ENCODE measurements at regions of chr3 and their contacts with region 1.

Region 1: GRCh38 chr3:187025656-187026316 is 95.5 kb downstream of the ST6GAL1 start:
- DNase-seq: peak in 1 of 2 donors; percentile 38
- H3K4me3 ChIP-seq: no peak overlapping the region
- H3K27ac ChIP-seq: peak overlapping the region; percentile 5 to 71 (median 36)
- H3K4me1 ChIP-seq: peaks cover 20 to 78% of the 10 kb centered on the region in 2 donors
- H3K27me3 ChIP-seq: no peaks in the 10 kb centered on the region
- CTCF ChIP-seq: no peak
- POLR2A ChIP-seq: no peak

Region 2: DNA sequence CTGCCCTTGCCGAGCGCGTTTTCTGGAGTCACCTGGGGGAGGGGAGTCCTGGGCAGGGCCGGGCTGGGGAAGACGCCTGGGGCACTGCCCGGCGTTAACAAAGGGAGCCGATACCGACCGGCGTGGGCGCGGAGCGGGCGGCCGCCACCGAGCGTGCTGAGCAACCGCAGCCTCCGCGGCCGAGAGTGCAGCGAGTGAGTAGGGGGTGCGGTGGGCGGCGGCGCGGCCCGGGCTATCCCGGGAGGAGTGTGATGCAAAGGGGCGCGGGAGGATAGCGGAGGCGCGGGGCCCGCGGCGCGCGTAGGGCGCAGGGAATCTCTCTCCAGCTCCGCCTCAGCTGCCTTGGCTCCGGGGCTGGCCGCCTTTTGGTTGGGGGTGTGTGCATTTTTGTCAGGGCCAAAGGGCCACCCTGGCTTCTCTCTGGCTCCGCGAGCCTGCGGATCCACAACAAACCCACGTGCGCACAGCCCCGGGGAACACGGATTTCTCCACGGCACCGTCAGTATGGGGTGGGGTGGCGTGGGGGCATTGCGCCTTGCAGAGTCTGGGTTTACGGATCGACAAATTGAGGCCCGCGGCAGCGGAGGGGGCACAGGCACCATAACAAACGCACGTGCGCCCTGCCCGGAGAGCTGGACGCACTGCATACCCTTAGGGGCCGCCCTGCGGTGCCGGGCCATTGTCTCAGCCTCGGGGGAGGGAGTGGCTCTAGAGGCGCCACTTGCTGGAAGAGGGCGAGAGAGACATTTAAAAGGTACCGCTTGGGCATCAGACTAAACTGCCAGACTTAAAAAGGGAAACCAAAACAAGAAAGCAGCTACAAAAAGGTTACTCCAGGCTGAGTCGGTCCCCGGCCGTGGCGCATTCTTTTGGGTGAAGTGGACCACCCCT is 94.9 kb before region 1 on chr3:
- intact Hi-C with region 1: loop called (anchors 10 kb)
- DNase-seq: peak; percentile 75 to 79
- H3K4me3 ChIP-seq: peak overlapping the region; percentile 47 to 97 (median 94)
- H3K27ac ChIP-seq: peak overlapping the region; percentile 82 to 93 (median 89)
- H3K4me1 ChIP-seq: peaks cover 18 to 23% of the 10 kb centered on the region in 2 donors
- H3K27me3 ChIP-seq: no peaks in the 10 kb centered on the region
- CTCF ChIP-seq: peak in 2 of 6 experiments; percentile 5 to 14
- POLR2A ChIP-seq: peak in 1 of 2 donors; percentile 59

Region 3: GRCh38 chr3:187342255-187342654 is 316.5 kb after region 1 on chr3:
- intact Hi-C with region 1: no loop called
- DNase-seq: no peak
- H3K4me3 ChIP-seq: no peak overlapping the region
- H3K27ac ChIP-seq: no peak overlapping the region
- H3K4me1 ChIP-seq: no peaks in the 10 kb centered on the region
- H3K27me3 ChIP-seq: no peaks in the 10 kb centered on the region
- CTCF ChIP-seq: no peak
- POLR2A ChIP-seq: no peak

Region 4: DNA sequence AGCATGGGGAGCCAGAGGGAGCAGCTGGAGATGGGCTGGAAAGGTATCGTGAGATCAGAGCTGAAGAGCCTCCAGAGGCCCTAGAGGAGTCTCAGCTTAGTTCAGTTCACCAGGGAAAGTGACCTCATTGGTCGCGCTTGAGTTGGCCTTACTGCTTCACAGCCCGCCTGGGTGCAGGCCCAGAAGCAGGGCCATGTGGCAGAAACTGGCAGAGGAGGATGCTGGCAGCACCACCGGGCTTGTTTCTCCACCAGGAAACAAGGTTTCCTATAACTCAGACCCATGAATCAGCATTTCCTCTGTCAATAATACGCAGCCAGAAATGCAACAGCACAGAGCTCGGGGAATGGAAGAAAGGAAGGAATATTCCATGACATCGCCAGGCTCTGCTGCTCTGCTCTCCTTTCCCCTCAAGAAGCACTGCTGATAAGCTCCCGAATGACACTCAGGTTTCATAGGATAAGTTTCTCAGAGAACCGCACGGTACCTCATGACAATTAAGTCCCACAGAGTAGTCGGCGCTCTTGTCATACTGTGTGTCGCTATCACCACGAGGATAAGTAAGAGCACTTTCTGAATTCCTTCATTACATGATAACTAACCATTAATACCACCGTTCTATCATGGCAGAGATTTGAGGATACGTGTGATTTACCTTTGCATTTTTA is 981.1 kb after region 1 on chr3:
- intact Hi-C with region 1: no loop called
- DNase-seq: peak; percentile 96
- H3K4me3 ChIP-seq: no peak overlapping the region
- H3K27ac ChIP-seq: peak overlapping the region; percentile 49 to 66 (median 55)
- H3K4me1 ChIP-seq: peaks cover 0 to 12% of the 10 kb centered on the region in 2 donors
- H3K27me3 ChIP-seq: no peaks in the 10 kb centered on the region
- CTCF ChIP-seq: no peak
- POLR2A ChIP-seq: peak in 1 of 2 donors; percentile 18

Measured in thyroid gland (tissue), 4 donors.